OCI-LY7 (cell line): ENCODE measurements at regions of chr3 and their contacts with region 1.

Region 1: DNA sequence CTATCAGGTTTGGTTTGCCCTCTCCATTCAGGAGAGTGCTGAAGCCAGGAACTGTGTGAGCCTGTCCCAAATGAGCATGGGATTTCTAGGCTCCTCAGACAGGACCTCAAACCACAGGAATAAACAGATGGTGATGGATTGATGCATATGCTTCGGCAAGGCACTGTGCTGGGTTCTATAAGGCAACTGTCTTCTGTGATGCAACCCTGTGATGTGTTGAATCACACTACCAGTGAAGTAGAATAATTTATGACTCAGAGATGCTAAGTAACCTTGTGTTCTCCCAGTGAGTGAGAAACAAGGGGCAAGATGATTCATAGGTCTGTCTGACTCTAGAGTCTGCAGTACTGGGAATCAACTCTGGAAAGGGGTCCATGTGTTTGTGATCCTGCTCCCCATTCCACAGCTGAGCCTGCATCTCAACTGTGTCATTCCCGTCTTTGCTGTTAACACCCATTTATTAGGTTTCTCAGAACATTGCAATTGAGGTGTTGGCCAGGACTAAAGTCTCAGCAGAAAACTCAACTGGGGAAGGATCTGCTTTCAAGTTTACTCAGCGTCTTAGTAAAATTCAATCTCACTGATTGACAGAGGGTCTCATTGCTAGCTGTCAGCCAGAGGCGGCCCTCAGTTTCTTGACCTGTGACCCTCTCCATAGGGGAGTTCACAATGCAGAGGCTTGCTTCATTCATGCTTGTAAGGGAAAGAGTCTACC is 510.1 kb upstream of the CFAP20DC start:
- DNase-seq: no peak
- H3K4me3 ChIP-seq: no peak overlapping the region
- H3K27ac ChIP-seq: no peak overlapping the region
- H3K4me1 ChIP-seq: no peaks in the 10 kb centered on the region
- CTCF ChIP-seq: no peak

Region 2: DNA sequence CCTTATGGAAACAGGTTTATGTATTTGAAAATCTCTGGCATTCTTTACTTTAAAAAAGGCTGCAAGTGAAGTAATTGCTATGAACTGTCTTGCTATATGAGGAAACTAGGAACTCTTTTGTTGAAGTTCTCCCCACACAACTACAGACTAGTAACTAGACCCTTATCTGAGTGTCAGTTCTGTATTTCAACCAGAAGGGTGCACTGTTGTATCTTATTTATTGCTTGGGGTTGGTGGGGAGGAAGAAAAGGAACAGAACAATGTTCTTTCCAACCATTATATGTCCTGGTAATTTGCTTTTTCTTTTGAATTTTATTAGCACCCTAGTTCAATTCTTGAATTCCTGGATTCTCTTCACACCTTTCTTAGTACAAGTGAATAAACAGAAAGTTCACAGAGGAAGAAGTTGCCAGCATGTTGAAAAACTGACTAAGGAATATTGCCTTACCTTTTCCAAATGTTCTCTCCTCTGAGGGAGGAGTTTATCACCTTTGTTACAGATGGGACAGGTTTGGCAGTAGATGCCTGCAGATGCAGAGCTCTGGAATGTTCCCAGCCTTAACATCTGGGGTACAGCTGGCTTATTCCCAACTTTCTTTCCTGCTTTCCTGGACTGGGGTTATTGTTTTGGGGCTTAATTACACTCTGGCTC is 347.6 kb before region 1 on chr3:
- CTCF ChIA-PET with region 1: no interaction called
- POLR2A ChIA-PET with region 1: no interaction called
- intact Hi-C with region 1: loop called (anchors 10 kb)
- DNase-seq: peak; percentile 40
- H3K4me3 ChIP-seq: no peak overlapping the region
- H3K27ac ChIP-seq: no peak overlapping the region
- H3K4me1 ChIP-seq: no peaks in the 10 kb centered on the region
- CTCF ChIP-seq: peak; percentile 83

Region 3: GRCh38 chr3:59502806-59503205 is 57.1 kb before region 1 on chr3:
- CTCF ChIA-PET with region 1: no interaction called
- POLR2A ChIA-PET with region 1: no interaction called
- intact Hi-C with region 1: loop called (anchors 10 kb)
- DNase-seq: no peak
- H3K4me3 ChIP-seq: no peak overlapping the region
- H3K27ac ChIP-seq: no peak overlapping the region
- H3K4me1 ChIP-seq: no peaks in the 10 kb centered on the region
- CTCF ChIP-seq: no peak

Region 4: GRCh38 chr3:59677747-59678687 is 118.1 kb after region 1 on chr3:
- CTCF ChIA-PET with region 1: no interaction called
- POLR2A ChIA-PET with region 1: no interaction called
- intact Hi-C with region 1: no loop called
- DNase-seq: no peak
- H3K4me3 ChIP-seq: no peak overlapping the region
- H3K27ac ChIP-seq: no peak overlapping the region
- H3K4me1 ChIP-seq: no peaks in the 10 kb centered on the region
- CTCF ChIP-seq: no peak

Region 5: DNA sequence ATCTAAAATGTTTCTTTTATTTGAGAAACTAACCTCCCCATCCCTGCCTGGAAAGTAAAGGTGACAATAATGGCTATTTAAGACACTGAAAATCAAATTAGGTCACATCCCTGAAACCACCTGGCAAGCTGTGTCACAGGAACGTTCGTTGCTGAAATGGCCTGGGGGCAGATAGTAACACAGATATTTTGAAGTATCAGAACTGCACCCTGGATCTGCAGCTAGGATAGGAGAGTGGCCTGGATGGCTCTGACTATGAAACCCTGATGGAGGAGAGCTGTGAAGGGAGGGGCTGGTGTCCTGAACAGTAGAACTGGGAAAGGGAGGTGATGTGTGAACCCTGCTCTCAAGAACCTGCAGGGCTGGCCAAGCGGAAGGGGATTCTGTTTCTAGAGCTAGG is 138.2 kb after region 1 on chr3:
- CTCF ChIA-PET with region 1: no interaction called
- POLR2A ChIA-PET with region 1: no interaction called
- intact Hi-C with region 1: no loop called
- DNase-seq: no peak
- H3K4me3 ChIP-seq: no peak overlapping the region
- H3K27ac ChIP-seq: no peak overlapping the region
- H3K4me1 ChIP-seq: no peaks in the 10 kb centered on the region
- CTCF ChIP-seq: no peak